ENCODE measurements at regions of chr16 and their contacts with region 1.

Region 1: DNA sequence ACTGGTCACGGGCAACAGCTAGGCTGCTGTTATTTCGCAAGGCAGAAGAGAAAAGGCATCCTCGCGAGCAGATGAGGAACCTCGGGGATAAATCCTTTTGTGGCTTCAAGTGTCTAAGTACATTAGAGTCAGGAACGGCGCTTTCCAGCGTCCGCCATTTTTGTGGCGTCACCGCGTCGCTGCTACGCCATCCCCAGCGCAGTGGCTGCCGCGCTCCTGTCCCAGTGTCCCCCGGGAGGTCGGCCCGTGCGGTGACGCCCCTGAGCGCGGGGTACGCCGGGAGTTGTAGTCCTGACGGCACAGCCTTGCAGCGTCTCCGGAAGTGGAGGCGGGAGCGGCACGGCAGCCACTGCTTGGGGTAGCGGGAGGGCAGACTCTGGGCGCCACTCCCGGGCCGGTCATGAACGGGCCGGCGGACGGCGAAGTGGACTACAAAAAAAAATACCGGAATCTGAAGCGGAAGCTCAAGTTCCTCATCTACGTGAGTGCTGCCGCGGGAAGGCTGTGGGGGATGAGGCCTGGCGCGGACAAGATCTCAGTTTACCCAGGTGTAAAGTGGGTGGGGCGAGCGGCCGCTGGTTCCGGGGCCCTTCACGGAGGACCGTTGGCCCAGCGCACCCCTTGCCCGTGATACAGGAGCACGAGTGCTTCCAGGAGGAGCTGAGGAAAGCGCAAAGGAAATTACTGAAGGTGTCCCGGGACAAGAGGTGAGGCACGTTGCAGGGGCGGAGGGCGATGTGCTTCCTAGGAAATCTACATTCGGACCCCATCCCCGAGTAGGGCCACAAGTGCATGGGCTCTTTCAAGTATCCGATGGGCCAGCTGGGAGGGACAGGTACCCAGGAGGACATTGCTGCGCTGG is at the start of gene INO80E:
- DNase-seq: peak; percentile 97
- ATAC-seq: peak; percentile 96
- H3K4me3 ChIP-seq: peak within 1 kb of the TSS; percentile 89 to 100 (median 98)
- H3K4me3 Mint-ChIP-seq: peak within 1 kb of the TSS; percentile 98
- H3K27ac ChIP-seq: peak within 1 kb of the TSS; percentile 94 to 97
- H3K27ac Mint-ChIP-seq: peak within 1 kb of the TSS; percentile 94
- H3K4me1 ChIP-seq: peaks cover 15 to 22% of the 10 kb centered on the region in 2 donors
- H3K4me1 Mint-ChIP-seq: peaks cover 43% of the 10 kb centered on the region
- H3K27me3 ChIP-seq: no peaks in the 10 kb centered on the region
- H3K27me3 Mint-ChIP-seq: no peaks in the 10 kb centered on the region
- CTCF ChIP-seq: no peak
- total RNA-seq, gene INO80E: 113 and 119 TPM in 2 replicates

Region 2: GRCh38 chr16:29973384-29974246 is 22.5 kb before region 1 on chr16 and contains the start of gene TAOK2:
- CTCF ChIA-PET with region 1: interaction called, 5 read pairs
- POLR2A ChIA-PET with region 1: interaction called, 4 read pairs
- intact Hi-C with region 1: loop called (anchors 1 kb)
- DNase-seq: peak; percentile 98
- ATAC-seq: peak; percentile 99
- H3K4me3 ChIP-seq: peak within 1 kb of the TSS; percentile 79 to 100 (median 99)
- H3K4me3 Mint-ChIP-seq: peak within 1 kb of the TSS; percentile 95
- H3K27ac ChIP-seq: peak within 1 kb of the TSS; percentile 73 to 79
- H3K27ac Mint-ChIP-seq: peak within 1 kb of the TSS; percentile 94
- H3K4me1 ChIP-seq: peaks cover 31 to 38% of the 10 kb centered on the region in 2 donors
- H3K4me1 Mint-ChIP-seq: peaks cover 36% of the 10 kb centered on the region
- H3K27me3 ChIP-seq: no peaks in the 10 kb centered on the region
- H3K27me3 Mint-ChIP-seq: no peaks in the 10 kb centered on the region
- CTCF ChIP-seq: no peak
- total RNA-seq, gene TAOK2: 50.8 and 51.9 TPM in 2 replicates

Measured in B cell (primary cell).